Head of caudate nucleus (tissue), 42 donors: ENCODE measurements at regions of chr2 and their contacts with region 1.

Region 1: DNA sequence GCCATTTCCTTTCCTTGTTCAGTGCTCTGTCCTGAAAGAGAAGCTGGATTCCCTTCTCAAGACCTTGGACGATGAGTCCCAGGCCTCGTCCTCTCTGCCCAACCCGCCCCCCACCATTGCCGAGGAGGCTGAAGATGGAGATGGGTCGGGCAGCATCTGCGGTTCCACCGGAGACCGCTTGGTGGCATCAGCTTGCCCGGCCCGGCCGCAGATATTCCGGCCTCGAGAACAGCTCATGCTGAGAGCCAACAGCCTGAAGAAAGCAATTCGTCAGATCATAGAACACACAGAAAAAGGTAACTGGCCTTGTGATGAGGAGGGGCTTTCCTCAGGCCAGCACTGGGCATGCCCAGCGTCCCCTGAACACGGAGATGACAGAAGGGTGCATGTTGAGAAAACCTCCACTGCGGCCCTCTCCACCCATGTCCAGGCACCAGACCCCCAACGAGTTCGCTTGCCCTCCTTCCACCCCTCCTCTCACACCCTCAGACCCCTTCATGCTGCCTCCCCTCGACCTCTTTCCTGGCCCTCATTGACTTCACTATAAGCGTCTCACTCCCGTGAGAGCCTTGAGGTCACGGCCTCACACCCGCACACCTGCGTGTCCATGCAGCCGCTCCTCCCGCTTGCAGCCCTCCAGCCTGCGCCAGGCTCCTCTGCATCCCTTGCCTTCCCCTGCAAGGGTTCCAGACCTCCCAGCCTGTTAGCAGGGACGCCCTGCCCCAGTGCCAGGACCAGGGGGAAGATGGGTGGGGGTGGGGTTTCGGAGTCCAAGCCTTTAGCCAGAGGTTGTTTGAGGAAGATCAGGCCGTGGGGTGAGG is 95.0 kb downstream of the DGKD start:
- DNase-seq: peak in 41 of 42 donors; percentile 28 to 85 (median 65)

Region 2: GRCh38 chr2:233404222-233404621 is 45.1 kb before region 1 on chr2:
- intact Hi-C with region 1: no loop called
- DNase-seq: peak in 5 of 42 donors; percentile 24 to 58 (median 38)

Region 3: DNA sequence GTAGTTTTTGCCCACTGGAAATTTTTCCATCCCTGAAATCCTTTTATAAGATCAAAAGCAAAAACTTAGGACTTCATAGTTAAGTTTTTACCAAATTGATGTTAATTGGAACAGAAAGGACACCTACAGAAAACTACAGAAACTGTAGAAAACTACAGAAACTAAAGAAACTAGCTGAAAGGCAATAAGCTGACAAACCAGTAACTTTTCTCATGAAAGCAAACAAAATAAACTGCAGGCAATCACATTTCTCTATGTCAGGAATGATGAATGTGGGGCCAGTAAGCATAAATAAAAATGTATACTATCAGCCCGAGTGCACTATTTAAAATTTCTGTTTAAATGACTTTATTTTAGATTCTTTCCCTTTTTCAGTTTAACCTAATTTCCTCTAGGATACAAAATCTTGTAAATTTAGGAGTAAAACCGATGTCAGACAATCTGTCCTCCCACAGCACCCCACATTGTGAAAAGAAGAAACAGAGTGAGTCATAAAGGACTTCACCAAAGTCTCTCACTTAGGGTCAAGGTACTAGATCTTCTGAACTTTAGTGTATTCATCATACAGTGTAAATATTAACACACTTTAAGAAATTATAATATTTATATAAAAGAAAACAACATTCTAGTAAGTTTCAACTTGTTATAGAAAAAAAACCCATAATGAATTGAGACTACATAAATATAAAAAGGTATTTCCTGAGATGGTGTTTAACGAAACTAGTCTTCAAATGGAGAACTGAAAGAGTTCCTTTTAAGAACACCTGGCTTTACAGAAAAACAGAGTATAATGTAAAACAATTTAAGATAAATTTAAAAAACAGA is 70.7 kb after region 1 on chr2:
- intact Hi-C with region 1: no loop called
- DNase-seq: peak in 4 of 42 donors; percentile 8 to 22 (median 21)

Region 4: GRCh38 chr2:233556756-233557736 is 107.8 kb after region 1 on chr2:
- intact Hi-C with region 1: no loop called
- DNase-seq: no peak

Region 5: DNA sequence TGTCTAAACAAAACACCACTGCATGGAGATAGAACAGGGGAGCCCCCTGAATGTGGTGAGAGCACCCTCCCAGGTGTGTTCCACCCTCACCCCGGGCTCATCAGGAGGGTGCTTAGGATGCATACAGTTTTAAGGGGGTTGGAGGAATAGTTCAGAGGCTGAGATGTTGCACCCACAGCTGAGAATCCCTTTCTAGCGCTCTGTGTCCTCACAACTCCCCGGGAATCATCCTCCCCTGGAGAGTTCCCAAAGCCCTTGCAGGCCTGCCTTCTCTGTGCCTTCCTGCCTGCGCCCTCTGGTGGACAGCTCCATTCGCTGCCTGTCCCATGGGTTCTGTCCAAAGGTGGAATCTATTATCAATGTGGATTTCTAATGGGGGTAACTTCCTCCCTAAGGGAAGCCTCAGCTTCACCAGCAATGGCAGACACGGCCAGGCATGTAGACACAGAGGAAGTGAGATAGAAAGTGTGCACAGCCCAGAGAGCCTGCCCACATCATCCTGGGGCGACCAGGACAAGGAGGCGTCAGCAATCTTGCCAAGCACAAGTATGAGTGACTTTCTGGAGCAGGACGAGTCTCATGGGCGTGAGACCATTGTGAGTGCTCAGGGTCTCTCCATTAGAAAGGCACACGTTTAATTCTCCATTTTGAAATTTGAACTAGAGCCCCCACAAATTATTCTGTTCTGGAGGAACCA is 262.2 kb after region 1 on chr2:
- intact Hi-C with region 1: loop called (anchors 5 kb)
- DNase-seq: peak; percentile 64 to 94 (median 84)